ENCODE measurements at regions of chr1 and their contacts with region 1.

Region 1: DNA sequence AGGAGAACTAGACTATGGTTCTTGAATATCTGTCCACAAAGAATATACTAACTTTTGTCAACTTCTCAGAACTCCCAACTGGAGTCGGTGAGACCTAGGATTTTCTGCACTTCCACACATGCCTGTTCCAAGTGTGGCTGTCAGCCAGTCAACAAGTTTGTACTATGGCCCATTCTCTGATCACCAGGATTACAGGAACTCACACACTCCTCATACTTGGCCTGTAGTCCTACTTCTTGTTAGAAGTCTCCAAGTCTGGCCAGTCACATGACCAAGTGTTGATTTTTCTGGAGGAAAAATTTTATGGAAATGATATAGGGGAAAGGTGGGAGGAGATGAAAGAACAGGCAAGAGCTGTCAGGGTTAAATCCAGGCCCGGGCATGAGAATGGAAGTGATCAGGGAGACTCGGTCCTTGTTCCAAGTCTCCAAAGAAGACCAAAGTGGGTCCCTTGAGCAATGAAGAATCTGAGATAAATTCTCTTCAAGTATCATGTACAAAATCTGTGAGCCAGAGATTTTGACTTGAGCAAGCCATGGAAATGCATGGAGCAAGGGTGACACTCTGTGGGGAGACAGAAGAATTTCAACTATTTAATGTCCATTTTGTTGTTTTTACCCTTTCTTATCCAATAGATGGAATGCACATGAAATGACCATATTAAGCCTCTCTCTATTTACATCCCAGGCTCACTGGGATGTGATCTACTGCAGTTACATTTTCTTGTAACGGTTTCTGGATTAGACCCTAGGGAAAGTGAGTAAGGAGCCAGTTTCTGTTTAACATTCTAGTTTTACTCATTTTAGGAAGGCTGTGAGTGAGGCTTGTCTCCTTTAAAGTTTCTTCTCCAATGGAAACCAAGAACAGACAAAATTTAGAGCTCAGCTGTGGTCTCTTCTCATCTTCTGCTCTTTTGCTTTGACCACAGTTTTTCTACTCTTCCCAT is 320.9 kb downstream of the ASTN1 start:
- DNase-seq: peak in 1 of 2 donors; percentile 63
- H3K4me3 ChIP-seq: no peak overlapping the region
- H3K27ac ChIP-seq: no peak overlapping the region
- H3K4me1 ChIP-seq: no peaks in the 10 kb centered on the region
- H3K27me3 ChIP-seq: no peaks in the 10 kb centered on the region
- CTCF ChIP-seq: peak; percentile 52 to 66 (median 54)

Region 2: DNA sequence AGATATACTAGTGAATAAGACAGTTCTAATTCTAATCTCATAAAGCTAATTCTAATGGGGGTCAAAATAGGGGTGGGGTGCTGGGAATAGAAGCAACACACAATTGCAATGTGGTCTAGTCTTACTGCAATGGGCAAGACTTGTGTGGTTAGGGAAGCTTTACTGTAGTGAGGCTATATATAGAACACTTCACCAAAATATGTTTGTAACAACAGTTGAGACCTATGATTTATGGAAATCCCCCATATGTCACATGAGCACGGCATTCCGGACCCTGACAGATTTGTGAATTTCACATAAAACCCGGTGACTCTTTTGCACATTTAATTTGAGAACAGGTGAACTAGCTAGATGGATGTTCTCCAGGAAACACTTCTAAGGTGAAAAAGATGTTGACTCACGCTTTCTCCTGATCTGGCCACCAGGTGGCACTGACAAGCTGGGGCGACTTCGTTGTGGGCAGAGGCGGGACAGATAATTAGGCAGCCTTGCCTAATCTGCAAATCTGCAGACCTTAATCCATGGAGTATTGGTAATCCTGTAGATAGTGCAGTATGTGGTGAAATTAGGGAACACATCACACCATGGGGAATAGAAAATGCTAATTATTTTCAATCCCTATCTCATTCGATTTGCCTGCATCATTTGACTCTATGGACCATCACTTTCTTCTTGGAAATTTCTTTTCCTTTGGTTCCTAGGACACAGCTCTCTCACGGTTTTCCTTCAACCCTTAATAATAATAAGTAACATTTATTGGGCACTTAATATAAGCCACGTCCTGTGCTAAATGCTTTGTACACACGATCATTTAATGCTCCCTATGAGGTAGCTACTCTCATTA is 1688.8 kb before region 1 on chr1:
- intact Hi-C with region 1: loop called (anchors 10 kb)
- DNase-seq: peak in 1 of 2 donors; percentile 82
- H3K4me3 ChIP-seq: no peak overlapping the region
- H3K27ac ChIP-seq: no peak overlapping the region
- H3K4me1 ChIP-seq: no peaks in the 10 kb centered on the region
- H3K27me3 ChIP-seq: no peaks in the 10 kb centered on the region
- CTCF ChIP-seq: peak; percentile 74 to 86 (median 81)

Region 3: GRCh38 chr1:176206961-176207902 is 636.4 kb before region 1 on chr1 and contains the start of gene COP1:
- intact Hi-C with region 1: loop called (anchors 10 kb)
- DNase-seq: peak; percentile 82 to 97
- H3K4me3 ChIP-seq: peak within 1 kb of the TSS; percentile 79 to 98
- H3K27ac ChIP-seq: peak within 1 kb of the TSS; percentile 94 to 98
- H3K4me1 ChIP-seq: peaks cover 3 to 20% of the 10 kb centered on the region in 2 donors
- H3K27me3 ChIP-seq: no peaks in the 10 kb centered on the region
- CTCF ChIP-seq: no peak
- total RNA-seq, gene COP1: 76.3 TPM

Region 4: GRCh38 chr1:176374967-176375569 is 468.6 kb before region 1 on chr1:
- intact Hi-C with region 1: loop called (anchors 1 kb)
- DNase-seq: peak in 1 of 2 donors; percentile 82
- H3K4me3 ChIP-seq: no peak overlapping the region
- H3K27ac ChIP-seq: no peak overlapping the region
- H3K4me1 ChIP-seq: no peaks in the 10 kb centered on the region
- H3K27me3 ChIP-seq: no peaks in the 10 kb centered on the region
- CTCF ChIP-seq: peak; percentile 41 to 74 (median 65)

Region 5: DNA sequence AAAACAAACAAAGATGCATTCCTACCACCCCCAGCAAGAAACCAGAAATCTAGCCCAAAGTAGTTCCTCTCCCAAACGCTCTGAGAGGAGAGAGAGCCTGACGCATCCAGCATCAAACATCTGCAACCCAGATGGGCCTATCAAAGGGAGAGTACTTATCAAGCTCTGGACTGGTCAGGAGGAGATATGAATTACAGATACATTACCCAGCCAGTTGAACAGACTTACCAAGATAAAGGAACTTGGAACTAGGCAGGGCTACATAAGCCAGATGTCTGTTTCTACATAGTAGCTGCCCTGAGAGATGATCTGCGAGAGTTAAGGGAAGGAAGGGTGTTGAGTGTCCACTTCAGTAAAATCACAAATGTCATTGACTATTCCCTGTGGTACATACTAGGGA is 242.3 kb before region 1 on chr1:
- intact Hi-C with region 1: no loop called
- DNase-seq: no peak
- H3K4me3 ChIP-seq: no peak overlapping the region
- H3K27ac ChIP-seq: no peak overlapping the region
- H3K4me1 ChIP-seq: no peaks in the 10 kb centered on the region
- H3K27me3 ChIP-seq: no peaks in the 10 kb centered on the region
- CTCF ChIP-seq: no peak

Region 6: GRCh38 chr1:176656257-176656995 is 187.2 kb before region 1 on chr1:
- intact Hi-C with region 1: loop called (anchors 2 kb)
- DNase-seq: peak; percentile 9 to 86
- H3K4me3 ChIP-seq: peak overlapping the region in 1 of 2 donors; percentile 5
- H3K27ac ChIP-seq: peak overlapping the region; percentile 89 to 96
- H3K4me1 ChIP-seq: peaks cover 0 to 14% of the 10 kb centered on the region in 2 donors
- H3K27me3 ChIP-seq: no peaks in the 10 kb centered on the region
- CTCF ChIP-seq: peak in 2 of 3 experiments; percentile 26 to 33

Region 7: DNA sequence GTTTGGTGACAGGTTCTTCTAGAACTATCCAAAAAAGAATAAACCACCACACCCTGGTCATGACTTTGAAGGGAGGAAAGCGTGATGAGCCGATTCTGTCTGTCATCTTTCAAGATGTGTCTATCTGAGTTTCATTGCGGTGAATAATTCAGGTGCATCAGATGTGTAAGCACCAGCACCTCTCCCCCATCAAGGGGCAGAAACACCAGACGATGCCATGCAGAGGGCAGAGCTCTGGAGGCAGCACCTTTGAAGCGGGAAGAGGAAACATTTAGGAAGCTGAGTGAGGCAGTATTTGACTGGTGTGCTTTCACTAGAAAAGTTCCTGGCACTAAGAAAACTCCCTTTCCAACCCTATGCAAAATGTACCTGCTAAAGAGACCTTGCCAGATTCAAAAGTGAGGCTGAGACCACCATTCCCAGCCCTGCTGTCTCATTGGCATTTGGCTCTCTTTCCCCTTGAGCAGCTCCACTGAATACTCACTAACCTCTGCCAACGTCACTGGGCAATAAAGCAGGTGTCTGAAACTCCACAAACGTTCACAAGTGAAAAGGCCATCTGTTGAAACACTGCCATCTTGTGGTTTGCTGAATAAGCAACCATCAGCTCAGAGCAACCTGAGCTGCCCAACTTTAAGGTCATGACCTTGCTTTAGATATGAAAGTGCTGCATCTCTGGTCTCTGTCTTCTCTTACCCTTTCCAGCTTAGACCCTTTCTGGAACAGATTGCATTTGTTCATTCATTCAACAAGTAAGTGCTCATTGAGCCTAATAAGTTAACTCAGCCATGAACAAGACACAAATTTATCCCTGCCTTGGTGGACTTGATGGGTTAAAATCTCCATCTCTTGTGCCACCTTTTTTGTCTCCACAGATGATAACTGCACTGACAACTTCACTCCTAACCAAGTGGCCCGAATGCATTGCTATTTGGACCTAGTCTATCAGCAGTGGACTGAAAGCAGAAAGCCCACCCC is 152.1 kb before region 1 on chr1:
- intact Hi-C with region 1: loop called (anchors 5 kb)
- DNase-seq: peak in 1 of 2 donors; percentile 66
- H3K4me3 ChIP-seq: no peak overlapping the region
- H3K27ac ChIP-seq: no peak overlapping the region
- H3K4me1 ChIP-seq: peaks cover 0 to 5% of the 10 kb centered on the region in 2 donors
- H3K27me3 ChIP-seq: no peaks in the 10 kb centered on the region
- CTCF ChIP-seq: peak; percentile 36 to 83 (median 73)

Region 8: DNA sequence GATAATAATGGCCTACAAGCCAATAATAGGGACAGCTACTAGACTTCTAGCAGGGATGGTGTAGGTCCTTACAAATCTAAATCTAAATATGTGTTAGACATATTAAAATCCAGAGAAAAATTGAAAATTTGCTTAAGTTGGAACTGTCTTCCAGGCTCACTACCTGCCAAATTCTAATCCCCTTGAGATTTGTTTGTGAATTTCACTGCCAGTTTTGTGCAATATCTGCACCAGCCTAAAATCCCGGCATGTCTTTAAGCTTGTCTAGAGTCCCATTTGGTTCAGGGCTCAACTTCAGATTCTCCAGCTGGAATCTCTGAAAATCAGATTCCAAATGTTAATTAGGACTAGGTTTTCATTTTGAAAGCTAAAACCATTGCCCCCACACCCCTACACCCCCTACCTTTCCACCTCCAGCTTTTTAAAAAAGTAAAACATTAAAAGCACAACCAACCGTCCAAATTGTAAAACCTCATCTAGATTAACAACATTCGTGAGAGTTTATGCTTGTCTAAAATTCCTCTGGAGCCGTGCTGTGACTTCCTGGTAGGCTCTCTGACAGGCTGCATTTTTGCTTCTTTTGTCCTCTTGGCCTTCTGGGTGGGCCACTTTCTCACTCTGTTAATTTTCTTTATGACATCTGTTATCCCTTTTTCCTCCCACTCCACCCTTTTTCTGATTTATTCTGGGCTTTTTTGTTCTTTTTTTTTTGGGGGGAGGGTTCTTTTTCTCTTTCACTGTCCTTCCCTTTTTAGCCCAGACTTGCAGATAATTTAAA is 31.9 kb before region 1 on chr1:
- intact Hi-C with region 1: no loop called
- DNase-seq: no peak
- H3K4me3 ChIP-seq: no peak overlapping the region
- H3K27ac ChIP-seq: no peak overlapping the region
- H3K4me1 ChIP-seq: no peaks in the 10 kb centered on the region
- H3K27me3 ChIP-seq: no peaks in the 10 kb centered on the region
- CTCF ChIP-seq: no peak

Measured in ascending aorta (tissue), 2 donors.